ENCODE measurements at regions of chr2 and their contacts with region 1.

Region 1: GRCh38 chr2:85538486-85539360 is at the start of gene MAT2A:
- DNase-seq: peak; percentile 72 to 96 (median 88)
- ATAC-seq: peak; percentile 87
- H3K4me3 ChIP-seq: peak within 1 kb of the TSS; percentile 92
- H3K4me3 Mint-ChIP-seq: peak within 1 kb of the TSS; percentile 91 to 98 (median 95)
- H3K27ac ChIP-seq: peak within 1 kb of the TSS; percentile 84
- H3K27ac Mint-ChIP-seq: peak within 1 kb of the TSS; percentile 90 to 97 (median 94)
- H3K4me1 ChIP-seq: peaks cover 19 to 27% of the 10 kb centered on the region in 2 donors
- H3K4me1 Mint-ChIP-seq: peaks cover 14 to 58% (median 47%) of the 10 kb centered on the region in 7 donors
- H3K27me3 ChIP-seq: no peaks in the 10 kb centered on the region
- H3K27me3 Mint-ChIP-seq: no peaks in the 10 kb centered on the region
- total RNA-seq, gene MAT2A: 96.3 to 268 (median 178) TPM

Region 2: GRCh38 chr2:83689402-83689801 is 1849.3 kb before region 1 on chr2:
- CTCF ChIA-PET with region 1: no interaction called
- POLR2A ChIA-PET with region 1: no interaction called
- intact Hi-C with region 1: no loop called
- DNase-seq: no peak
- ATAC-seq: no peak
- H3K4me3 ChIP-seq: no peak overlapping the region
- H3K4me3 Mint-ChIP-seq: no peak overlapping the region
- H3K27ac ChIP-seq: no peak overlapping the region
- H3K27ac Mint-ChIP-seq: no peak overlapping the region
- H3K4me1 ChIP-seq: no peaks in the 10 kb centered on the region
- H3K4me1 Mint-ChIP-seq: no peaks in the 10 kb centered on the region
- H3K27me3 ChIP-seq: no peaks in the 10 kb centered on the region
- H3K27me3 Mint-ChIP-seq: no peaks in the 10 kb centered on the region

Region 3: GRCh38 chr2:85409845-85410583 is 128.7 kb before region 1 on chr2 and contains the start of gene CAPG:
- CTCF ChIA-PET with region 1: no interaction called
- POLR2A ChIA-PET with region 1: interaction called, 11 read pairs
- intact Hi-C with region 1: no loop called
- DNase-seq: peak in 3 of 9 donors; percentile 27 to 59 (median 29)
- ATAC-seq: peak; percentile 60
- H3K4me3 ChIP-seq: peak within 1 kb of the TSS; percentile 63
- H3K4me3 Mint-ChIP-seq: peak within 1 kb of the TSS; percentile 66 to 94 (median 78)
- H3K27ac ChIP-seq: peak within 1 kb of the TSS; percentile 41
- H3K27ac Mint-ChIP-seq: peak within 1 kb of the TSS; percentile 33 to 81 (median 76)
- H3K4me1 ChIP-seq: peaks cover 30 to 55% of the 10 kb centered on the region in 2 donors
- H3K4me1 Mint-ChIP-seq: peaks cover 32 to 78% (median 56%) of the 10 kb centered on the region in 7 donors
- H3K27me3 ChIP-seq: no peaks in the 10 kb centered on the region
- H3K27me3 Mint-ChIP-seq: peaks cover 0 to 15% (median 0%) of the 10 kb centered on the region in 5 donors
- total RNA-seq, gene CAPG: 12.9 to 265 (median 29.7) TPM

Region 4: DNA sequence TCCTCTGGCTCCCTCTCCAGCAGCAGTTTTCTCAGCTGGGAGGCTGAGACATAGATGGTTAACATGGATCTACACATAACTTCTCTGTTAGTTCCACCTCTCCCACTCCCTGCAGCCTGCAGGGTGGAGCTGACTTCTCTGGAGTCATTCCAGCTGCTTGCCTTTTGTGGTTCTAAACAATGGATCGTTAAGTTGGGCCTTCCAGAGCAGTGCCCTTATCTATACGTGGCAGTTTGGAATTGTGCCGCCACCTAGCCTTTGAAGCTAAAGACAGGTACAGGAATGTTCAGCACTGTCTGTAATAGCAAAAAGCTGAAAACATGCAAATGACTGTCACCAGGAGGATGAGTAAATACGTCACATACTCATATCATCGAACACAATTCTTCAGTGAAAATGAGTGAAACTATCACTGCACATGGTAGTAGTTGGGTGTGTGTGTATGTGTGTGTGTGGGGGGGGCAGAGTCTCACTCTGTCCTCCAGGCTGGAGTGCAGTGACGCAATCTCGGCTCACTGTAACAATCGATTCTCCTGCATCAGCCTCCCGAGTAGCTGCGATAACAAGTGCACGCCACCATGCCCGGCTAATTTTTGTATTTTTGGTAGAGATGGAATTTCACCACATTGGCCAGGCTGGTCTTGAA is 69.9 kb before region 1 on chr2:
- CTCF ChIA-PET with region 1: no interaction called
- POLR2A ChIA-PET with region 1: no interaction called
- intact Hi-C with region 1: no loop called
- DNase-seq: no peak
- ATAC-seq: no peak
- H3K4me3 ChIP-seq: no peak overlapping the region
- H3K4me3 Mint-ChIP-seq: no peak overlapping the region
- H3K27ac ChIP-seq: no peak overlapping the region
- H3K27ac Mint-ChIP-seq: no peak overlapping the region
- H3K4me1 ChIP-seq: no peaks in the 10 kb centered on the region
- H3K4me1 Mint-ChIP-seq: peaks cover 0 to 1% (median 0%) of the 10 kb centered on the region in 7 donors
- H3K27me3 ChIP-seq: no peaks in the 10 kb centered on the region
- H3K27me3 Mint-ChIP-seq: peaks cover 0 to 5% (median 0%) of the 10 kb centered on the region in 5 donors

Region 5: GRCh38 chr2:85551698-85552678 is 13.3 kb after region 1 on chr2:
- CTCF ChIA-PET with region 1: interaction called, 31 read pairs
- POLR2A ChIA-PET with region 1: interaction called, 70 read pairs
- intact Hi-C with region 1: loop called (anchors 1 kb)
- DNase-seq: peak; percentile 70 to 92 (median 88)
- ATAC-seq: peak; percentile 97
- H3K4me3 ChIP-seq: no peak overlapping the region
- H3K4me3 Mint-ChIP-seq: no peak overlapping the region
- H3K27ac ChIP-seq: no peak overlapping the region
- H3K27ac Mint-ChIP-seq: peak overlapping the region in 5 of 9 donors; percentile 12 to 62 (median 38)
- H3K4me1 ChIP-seq: no peaks in the 10 kb centered on the region
- H3K4me1 Mint-ChIP-seq: peaks cover 0 to 10% (median 6%) of the 10 kb centered on the region in 7 donors
- H3K27me3 ChIP-seq: no peaks in the 10 kb centered on the region
- H3K27me3 Mint-ChIP-seq: no peaks in the 10 kb centered on the region

Region 6: DNA sequence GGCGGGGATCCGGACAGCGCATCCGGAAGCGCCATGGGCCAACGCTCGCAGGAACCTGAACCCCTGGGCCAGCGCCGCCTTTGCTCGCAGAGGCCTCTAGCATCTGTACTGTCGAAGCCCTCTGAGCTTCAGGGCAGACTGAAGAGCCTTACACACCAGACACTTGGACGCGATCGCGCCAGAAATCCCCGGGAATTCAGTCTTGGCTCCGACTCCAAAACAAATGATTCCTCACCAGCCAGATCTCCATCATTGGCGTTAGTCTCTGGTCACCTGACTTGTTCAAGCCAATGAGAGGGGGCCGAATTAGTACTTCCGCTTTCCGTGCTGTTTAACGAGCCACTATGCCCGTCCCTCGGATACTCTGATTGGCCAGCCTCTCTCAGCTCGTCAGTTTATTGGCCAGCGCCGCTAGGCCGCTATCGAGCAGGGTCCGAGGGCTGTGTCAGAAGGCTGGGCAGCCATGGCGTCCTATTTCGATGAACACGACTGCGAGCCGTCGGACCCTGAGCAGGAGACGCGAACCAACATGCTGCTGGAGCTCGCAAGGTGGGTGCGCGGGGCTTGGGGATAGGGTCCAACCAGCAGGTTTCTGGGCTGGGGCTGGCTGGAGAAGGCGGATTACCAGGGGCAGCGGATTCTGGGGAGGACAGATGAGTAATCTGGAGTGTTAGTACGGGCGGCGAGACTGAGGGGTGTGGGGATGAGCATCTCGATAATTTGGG is 56.7 kb after region 1 on chr2 and contains the start of gene RNF181:
- CTCF ChIA-PET with region 1: no interaction called
- POLR2A ChIA-PET with region 1: interaction called, 16 read pairs
- intact Hi-C with region 1: loop called in 1 of 2 experiments (anchors 1 kb)
- DNase-seq: peak; percentile 65 to 95 (median 90)
- ATAC-seq: peak; percentile 99
- H3K4me3 ChIP-seq: peak within 1 kb of the TSS; percentile 89
- H3K4me3 Mint-ChIP-seq: peak within 1 kb of the TSS; percentile 93 to 100 (median 98)
- H3K27ac ChIP-seq: peak within 1 kb of the TSS; percentile 88
- H3K27ac Mint-ChIP-seq: peak within 1 kb of the TSS; percentile 93 to 99 (median 97)
- H3K4me1 ChIP-seq: peaks cover 15 to 16% of the 10 kb centered on the region in 2 donors
- H3K4me1 Mint-ChIP-seq: peaks cover 25 to 48% (median 35%) of the 10 kb centered on the region in 7 donors
- H3K27me3 ChIP-seq: no peaks in the 10 kb centered on the region
- H3K27me3 Mint-ChIP-seq: no peaks in the 10 kb centered on the region
- total RNA-seq, gene RNF181: 38.5 to 118 (median 61.4) TPM

Region 7: GRCh38 chr2:85611705-85612587 is 73.2 kb after region 1 on chr2 and contains the start of gene C2orf68:
- CTCF ChIA-PET with region 1: no interaction called
- POLR2A ChIA-PET with region 1: interaction called, 16 read pairs
- intact Hi-C with region 1: loop called (anchors 1 to 2 kb)
- DNase-seq: peak; percentile 61 to 92 (median 75)
- ATAC-seq: peak; percentile 76
- H3K4me3 ChIP-seq: peak within 1 kb of the TSS; percentile 65
- H3K4me3 Mint-ChIP-seq: peak within 1 kb of the TSS; percentile 96 to 100 (median 98)
- H3K27ac ChIP-seq: peak within 1 kb of the TSS; percentile 81
- H3K27ac Mint-ChIP-seq: peak within 1 kb of the TSS; percentile 86 to 99 (median 96)
- H3K4me1 ChIP-seq: peaks cover 11 to 16% of the 10 kb centered on the region in 2 donors
- H3K4me1 Mint-ChIP-seq: peaks cover 14 to 52% (median 44%) of the 10 kb centered on the region in 7 donors
- H3K27me3 ChIP-seq: no peaks in the 10 kb centered on the region
- H3K27me3 Mint-ChIP-seq: no peaks in the 10 kb centered on the region
- total RNA-seq, gene C2orf68: 40.9 to 92.1 (median 51.6) TPM

Region 8: DNA sequence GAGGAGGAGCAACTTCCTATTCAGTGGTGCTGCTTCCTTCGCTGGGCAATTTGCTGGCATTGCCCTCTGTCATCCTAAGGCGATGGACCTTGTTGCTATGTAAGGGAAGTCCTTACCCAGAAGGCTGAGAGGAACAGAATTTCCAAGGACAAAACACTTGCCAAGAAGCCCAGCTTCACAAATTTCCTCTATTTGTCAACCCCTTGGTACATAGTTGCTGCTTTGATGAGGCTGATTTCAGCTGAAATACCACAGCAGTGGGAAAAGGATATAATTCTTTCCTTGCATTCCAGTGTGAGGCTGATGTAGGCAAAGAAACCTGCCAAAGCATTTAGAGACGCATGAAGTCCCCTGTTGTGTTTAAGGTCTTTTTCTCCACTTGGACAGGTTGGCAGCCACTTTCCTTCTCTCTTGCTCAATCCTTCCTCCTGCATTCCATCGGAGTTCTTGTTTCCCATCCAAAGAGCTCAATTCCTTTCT is 366.5 kb after region 1 on chr2:
- CTCF ChIA-PET with region 1: no interaction called
- POLR2A ChIA-PET with region 1: no interaction called
- intact Hi-C with region 1: no loop called
- DNase-seq: no peak
- ATAC-seq: no peak
- H3K4me3 ChIP-seq: no peak overlapping the region
- H3K4me3 Mint-ChIP-seq: no peak overlapping the region
- H3K27ac ChIP-seq: no peak overlapping the region
- H3K27ac Mint-ChIP-seq: no peak overlapping the region
- H3K4me1 ChIP-seq: peaks cover 0 to under 1% of the 10 kb centered on the region in 2 donors
- H3K4me1 Mint-ChIP-seq: peaks cover 2 to 16% (median 7%) of the 10 kb centered on the region in 7 donors
- H3K27me3 ChIP-seq: no peaks in the 10 kb centered on the region
- H3K27me3 Mint-ChIP-seq: peaks cover 0 to 4% (median 0%) of the 10 kb centered on the region in 5 donors